Activated CD4-positive, alpha-beta T cell treated with anti-CD3 and anti-CD28 coated beads for 36 hours (primary cell): ENCODE measurements at regions of chr1 and their contacts with region 1.

Region 1: DNA sequence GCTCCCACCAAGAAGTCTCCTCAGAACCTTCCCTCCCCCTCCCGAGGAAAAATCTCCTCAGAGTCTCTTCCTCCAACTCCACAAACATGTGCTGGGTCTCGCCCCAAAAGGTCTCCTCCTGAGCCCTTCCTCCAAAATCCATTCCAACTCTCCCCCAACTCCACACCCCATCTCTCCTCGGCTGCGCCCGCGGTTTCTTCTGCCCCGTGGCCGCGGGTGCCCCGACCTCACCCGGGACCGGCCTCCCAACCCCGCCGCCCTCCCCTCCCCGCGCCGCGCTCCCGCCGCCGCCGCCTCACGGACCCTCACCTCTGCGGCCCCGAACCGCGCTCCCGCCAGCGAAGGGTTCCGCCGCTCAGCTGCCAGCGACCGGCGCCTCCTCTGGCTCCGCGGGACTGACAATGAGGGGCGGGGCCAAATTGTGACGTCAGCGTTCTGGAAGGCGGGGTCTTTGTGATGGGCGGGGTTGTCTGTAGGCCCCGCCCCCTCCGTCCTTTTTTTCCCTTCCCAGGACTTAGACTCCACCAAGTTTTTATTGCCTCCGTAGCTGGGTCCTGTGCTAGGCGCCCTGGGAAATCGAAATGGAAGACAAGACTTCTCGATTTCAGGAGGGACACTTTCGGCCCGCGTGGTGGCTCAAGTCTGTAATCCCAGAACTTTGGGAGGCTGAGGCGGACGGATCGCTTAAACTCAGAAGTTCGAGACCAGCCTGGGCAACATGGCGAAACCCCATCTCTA is at the start of gene LUZP1:
- DNase-seq: peak; percentile 94
- ATAC-seq: peak; percentile 85
- H3K4me3 Mint-ChIP-seq: peak within 1 kb of the TSS; percentile 97
- H3K27ac Mint-ChIP-seq: peak within 1 kb of the TSS; percentile 86
- H3K4me1 Mint-ChIP-seq: peaks cover 27% of the 10 kb centered on the region
- H3K27me3 Mint-ChIP-seq: no peaks in the 10 kb centered on the region
- total RNA-seq, gene LUZP1: 13.2 to 13.6 TPM

Region 2: DNA sequence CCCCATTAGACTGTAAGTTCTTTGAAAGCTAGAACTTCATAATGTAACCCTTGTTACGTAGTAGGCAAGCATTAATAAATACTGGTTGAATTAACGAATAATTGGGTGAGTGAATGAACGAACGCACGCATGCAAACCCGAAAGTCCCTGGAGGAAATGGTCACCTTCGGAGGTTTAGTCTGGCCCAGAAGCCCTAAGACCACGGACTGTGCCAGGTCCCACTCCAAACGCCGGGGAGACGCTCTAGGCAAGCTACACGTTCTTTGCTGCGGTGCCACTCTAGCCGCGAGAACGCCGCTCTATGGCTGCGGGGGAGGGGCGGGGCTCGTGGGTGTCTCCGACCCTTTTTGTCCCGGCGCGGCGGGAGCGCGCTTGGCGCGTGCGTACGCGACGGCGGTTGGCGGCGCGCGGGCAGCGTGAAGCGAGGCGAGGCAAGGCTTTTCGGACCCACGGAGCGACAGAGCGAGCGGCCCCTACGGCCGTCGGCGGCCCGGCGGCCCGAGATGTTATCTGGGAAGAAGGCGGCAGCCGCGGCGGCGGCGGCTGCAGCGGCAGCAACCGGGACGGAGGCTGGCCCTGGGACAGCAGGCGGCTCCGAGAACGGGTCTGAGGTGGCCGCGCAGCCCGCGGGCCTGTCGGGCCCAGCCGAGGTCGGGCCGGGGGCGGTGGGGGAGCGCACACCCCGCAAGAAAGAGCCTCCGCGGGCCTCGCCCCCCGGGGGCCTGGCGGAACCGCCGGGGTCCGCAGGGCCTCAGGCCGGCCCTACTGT is 149.3 kb before region 1 on chr1 and contains the start of gene KDM1A:
- CTCF ChIA-PET with region 1: no interaction called
- POLR2A ChIA-PET with region 1: no interaction called
- intact Hi-C with region 1: loop called (anchors 1 to 5 kb)
- DNase-seq: peak; percentile 96
- ATAC-seq: peak; percentile 97
- H3K4me3 Mint-ChIP-seq: peak within 1 kb of the TSS; percentile 98
- H3K27ac Mint-ChIP-seq: peak within 1 kb of the TSS; percentile 90
- H3K4me1 Mint-ChIP-seq: peaks cover 43% of the 10 kb centered on the region
- H3K27me3 Mint-ChIP-seq: no peaks in the 10 kb centered on the region
- total RNA-seq, gene KDM1A: 66.5 to 73.2 TPM

Region 3: DNA sequence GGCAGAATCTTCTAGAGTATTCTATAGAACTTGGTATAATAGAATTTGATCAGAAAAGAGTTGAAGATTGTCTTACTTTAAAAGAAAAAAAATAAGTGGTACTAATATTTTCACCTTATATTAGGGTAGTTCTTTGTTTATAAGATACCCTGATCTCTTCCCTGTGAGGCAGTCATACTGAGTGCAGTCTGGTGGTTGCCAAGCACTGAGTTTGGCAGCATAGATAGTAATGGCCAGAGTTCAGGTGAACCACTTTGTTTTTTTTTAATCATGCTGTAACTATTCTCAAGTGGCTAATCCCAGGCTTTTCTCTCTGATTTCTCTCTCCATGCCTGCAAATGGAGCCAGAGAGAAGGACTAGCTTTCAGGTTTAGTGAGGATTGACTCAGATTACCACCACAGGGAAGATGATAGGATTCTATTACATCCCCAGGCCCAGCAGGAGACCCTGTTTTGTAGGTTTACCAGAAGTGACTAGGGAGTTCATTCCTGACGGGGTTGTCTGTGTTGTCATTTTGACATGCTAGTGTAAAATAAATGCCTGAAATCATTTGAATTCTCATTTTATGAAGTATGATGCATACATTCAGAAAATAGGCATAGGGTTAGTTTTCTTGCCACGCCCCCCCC is 132.7 kb before region 1 on chr1:
- CTCF ChIA-PET with region 1: no interaction called
- POLR2A ChIA-PET with region 1: no interaction called
- intact Hi-C with region 1: no loop called
- DNase-seq: no peak
- ATAC-seq: no peak
- H3K4me3 Mint-ChIP-seq: no peak overlapping the region
- H3K27ac Mint-ChIP-seq: no peak overlapping the region
- H3K4me1 Mint-ChIP-seq: peaks cover 42% of the 10 kb centered on the region
- H3K27me3 Mint-ChIP-seq: no peaks in the 10 kb centered on the region

Region 4: DNA sequence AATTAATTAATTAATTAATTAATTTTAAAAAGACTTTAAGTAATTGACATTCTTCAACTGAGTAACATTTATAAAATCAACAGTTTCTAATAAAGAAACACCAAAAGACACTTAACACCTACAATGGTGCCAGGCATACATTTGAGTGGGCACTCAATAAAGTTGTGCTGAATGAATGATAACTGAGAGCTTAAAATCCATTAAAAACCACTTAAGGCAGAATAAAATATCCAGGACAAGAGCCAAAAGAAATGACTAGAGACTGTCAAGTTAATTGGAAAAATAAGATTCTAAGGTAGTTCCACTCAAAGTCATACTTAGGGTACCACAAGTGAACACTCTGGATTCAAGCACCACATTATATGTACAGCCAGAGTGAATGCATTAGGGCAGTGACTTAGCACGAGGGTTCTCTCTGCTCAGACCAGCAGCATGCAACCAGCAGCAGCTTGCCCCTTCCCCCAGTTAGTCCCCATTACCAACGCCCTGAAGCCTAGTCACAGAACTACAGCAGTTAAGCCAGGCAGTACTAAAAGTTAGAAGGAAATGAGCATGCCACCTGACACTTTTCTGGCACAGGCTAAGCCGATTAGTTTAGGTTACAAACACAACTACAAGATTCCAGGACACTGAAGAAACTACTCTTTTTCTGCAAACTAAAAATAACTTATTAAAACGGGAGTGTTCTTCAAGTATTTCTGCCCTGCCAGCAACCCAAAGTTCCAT is 46.4 kb before region 1 on chr1:
- CTCF ChIA-PET with region 1: interaction called, 3 read pairs
- POLR2A ChIA-PET with region 1: interaction called, 5 read pairs
- intact Hi-C with region 1: loop called in 1 of 2 experiments (anchors 1 kb)
- DNase-seq: no peak
- ATAC-seq: no peak
- H3K4me3 Mint-ChIP-seq: no peak overlapping the region
- H3K27ac Mint-ChIP-seq: no peak overlapping the region
- H3K4me1 Mint-ChIP-seq: peaks cover 49% of the 10 kb centered on the region
- H3K27me3 Mint-ChIP-seq: no peaks in the 10 kb centered on the region

Region 5: GRCh38 chr1:23149114-23149513 is 19.5 kb before region 1 on chr1:
- CTCF ChIA-PET with region 1: interaction called, 4 read pairs
- POLR2A ChIA-PET with region 1: no interaction called
- intact Hi-C with region 1: loop called in 1 of 2 experiments (anchors 1 kb)
- DNase-seq: no peak
- ATAC-seq: no peak
- H3K4me3 Mint-ChIP-seq: no peak overlapping the region
- H3K27ac Mint-ChIP-seq: no peak overlapping the region
- H3K4me1 Mint-ChIP-seq: peaks cover 20% of the 10 kb centered on the region
- H3K27me3 Mint-ChIP-seq: no peaks in the 10 kb centered on the region

Region 6: GRCh38 chr1:24355466-24355865 is 1186.8 kb after region 1 on chr1:
- CTCF ChIA-PET with region 1: no interaction called
- POLR2A ChIA-PET with region 1: no interaction called
- intact Hi-C with region 1: no loop called
- DNase-seq: no peak
- ATAC-seq: no peak
- H3K4me3 Mint-ChIP-seq: no peak overlapping the region
- H3K27ac Mint-ChIP-seq: no peak overlapping the region
- H3K4me1 Mint-ChIP-seq: peaks cover 25% of the 10 kb centered on the region
- H3K27me3 Mint-ChIP-seq: no peaks in the 10 kb centered on the region